Psoas muscle (tissue), 8 donors: ENCODE measurements at regions of chr11 and their contacts with region 1.

Region 1: DNA sequence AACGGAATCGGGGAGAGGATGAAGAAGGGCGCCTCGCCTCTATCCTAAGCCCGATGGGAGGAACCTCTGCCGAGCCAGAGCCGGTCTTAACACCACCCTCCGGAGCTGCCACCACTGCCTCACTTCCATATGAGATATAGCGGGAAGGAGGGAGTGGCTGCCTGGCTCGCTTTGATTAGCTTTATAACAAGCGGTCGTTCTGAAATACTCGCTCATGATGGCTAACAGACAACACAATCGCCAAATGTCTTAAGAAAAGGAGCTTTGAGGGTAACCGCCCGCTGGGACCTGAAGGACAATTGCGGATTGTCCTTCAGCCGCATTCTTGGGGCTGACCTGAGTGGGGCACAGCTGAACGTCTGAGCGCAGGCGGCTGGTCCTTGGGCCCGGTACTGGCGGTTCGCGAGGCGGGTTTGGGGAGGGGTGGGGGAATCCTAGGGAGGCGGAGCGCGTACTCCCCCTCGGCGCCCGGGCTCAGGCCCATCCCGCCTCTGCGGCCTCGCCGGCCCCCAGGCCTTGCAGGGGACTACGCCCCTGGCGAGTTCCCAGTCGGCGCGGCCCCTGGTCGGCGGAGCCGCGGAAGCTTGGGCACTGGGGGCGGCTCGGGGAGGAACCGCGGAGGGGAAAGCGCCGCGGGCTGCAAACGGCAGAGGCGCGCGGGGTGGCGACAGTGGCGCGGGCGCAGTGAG is at the start of gene PLAAT5:
- DNase-seq: peak; percentile 49 to 67
- ATAC-seq: peak in 3 of 4 donors; percentile 66 to 76 (median 68)
- H3K4me3 ChIP-seq: peak within 1 kb of the TSS; percentile 61
- H3K27ac ChIP-seq: no peak within 1 kb of the TSS
- H3K4me1 ChIP-seq: no peaks in the 10 kb centered on the region
- H3K27me3 ChIP-seq: peaks cover 0 to 37% (median 0%) of the 10 kb centered on the region in 3 donors
- CTCF ChIP-seq: no peak
- total RNA-seq, gene PLAAT5: 0.11 to 0.59 (median 0.44) TPM

Region 2: DNA sequence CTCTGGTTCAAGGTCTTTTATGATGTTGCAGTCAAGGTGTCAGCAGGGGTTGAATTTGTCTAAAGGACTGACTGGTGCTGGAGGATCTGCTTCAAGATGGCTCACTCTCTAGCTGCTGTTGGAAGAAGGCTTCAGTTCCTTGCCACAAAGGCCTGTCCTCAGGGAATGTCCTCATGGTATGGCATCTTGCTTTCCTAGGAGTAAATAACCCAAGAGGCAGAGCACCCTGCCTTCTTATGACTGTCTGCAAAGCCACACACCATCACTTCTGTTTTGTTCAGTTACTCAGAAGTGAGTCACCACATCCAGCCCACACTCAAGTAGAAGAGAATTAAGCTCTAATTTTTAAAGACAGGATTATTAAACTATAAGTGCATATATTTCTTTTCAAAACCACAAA is 45.0 kb before region 1 on chr11:
- intact Hi-C with region 1: loop called in 1 of 2 experiments (anchors 1 kb)
- DNase-seq: no peak
- ATAC-seq: no peak
- H3K4me3 ChIP-seq: no peak overlapping the region
- H3K27ac ChIP-seq: no peak overlapping the region
- H3K4me1 ChIP-seq: no peaks in the 10 kb centered on the region
- H3K27me3 ChIP-seq: peaks cover 0 to 2% (median 2%) of the 10 kb centered on the region in 3 donors
- CTCF ChIP-seq: no peak

Region 3: GRCh38 chr11:63478896-63479295 is 11.8 kb before region 1 on chr11:
- intact Hi-C with region 1: no loop called
- DNase-seq: no peak
- ATAC-seq: peak; percentile 78 to 88 (median 80)
- H3K4me3 ChIP-seq: no peak overlapping the region
- H3K27ac ChIP-seq: no peak overlapping the region
- H3K4me1 ChIP-seq: no peaks in the 10 kb centered on the region
- H3K27me3 ChIP-seq: no peaks in the 10 kb centered on the region
- CTCF ChIP-seq: peak; percentile 91

Region 4: DNA sequence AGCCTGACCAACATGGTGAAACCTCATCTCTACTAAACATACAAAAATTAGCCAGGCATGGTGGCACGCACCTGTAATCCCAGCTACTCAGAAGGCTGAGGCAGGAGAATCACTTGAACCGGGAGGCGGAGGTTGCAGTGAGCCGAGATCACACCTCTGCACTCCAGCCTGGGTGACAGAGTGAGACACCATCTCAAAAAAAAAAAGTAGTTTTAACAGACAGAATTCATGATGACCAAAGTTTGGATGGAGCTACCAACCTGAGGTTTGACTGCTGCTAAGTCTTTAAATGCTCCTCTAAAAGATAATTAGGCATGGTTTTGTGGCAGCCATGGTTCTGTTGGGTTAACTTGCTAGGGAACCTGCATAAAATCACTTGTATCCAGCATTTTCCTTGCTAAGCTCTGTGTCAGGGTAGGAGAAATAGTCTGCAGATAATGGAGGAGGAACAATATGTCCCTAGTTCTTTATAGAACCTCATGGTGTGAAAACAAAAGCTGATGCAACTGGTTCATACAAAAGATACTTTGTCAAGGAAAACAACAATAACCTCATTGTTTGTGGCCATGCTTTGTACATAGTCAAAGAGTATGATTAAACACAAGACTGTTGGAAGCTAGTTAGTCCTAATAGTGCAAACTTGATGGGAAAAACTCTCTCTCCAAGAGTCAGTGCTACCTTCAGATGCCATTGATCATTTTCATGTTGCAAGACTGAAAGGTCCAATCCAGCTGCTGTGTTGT is 92.4 kb after region 1 on chr11:
- intact Hi-C with region 1: loop called in 1 of 2 experiments (anchors 10 kb)
- DNase-seq: no peak
- ATAC-seq: no peak
- H3K4me3 ChIP-seq: no peak overlapping the region
- H3K27ac ChIP-seq: no peak overlapping the region
- H3K4me1 ChIP-seq: no peaks in the 10 kb centered on the region
- H3K27me3 ChIP-seq: no peaks in the 10 kb centered on the region
- CTCF ChIP-seq: no peak